Posterior vena cava (tissue), 2 donors: ENCODE measurements at regions of chr15 and their contacts with region 1.

Region 1: GRCh38 chr15:59349680-59350420 is 22.8 kb downstream of the MYO1E start:
- DNase-seq: no peak

Region 2: DNA sequence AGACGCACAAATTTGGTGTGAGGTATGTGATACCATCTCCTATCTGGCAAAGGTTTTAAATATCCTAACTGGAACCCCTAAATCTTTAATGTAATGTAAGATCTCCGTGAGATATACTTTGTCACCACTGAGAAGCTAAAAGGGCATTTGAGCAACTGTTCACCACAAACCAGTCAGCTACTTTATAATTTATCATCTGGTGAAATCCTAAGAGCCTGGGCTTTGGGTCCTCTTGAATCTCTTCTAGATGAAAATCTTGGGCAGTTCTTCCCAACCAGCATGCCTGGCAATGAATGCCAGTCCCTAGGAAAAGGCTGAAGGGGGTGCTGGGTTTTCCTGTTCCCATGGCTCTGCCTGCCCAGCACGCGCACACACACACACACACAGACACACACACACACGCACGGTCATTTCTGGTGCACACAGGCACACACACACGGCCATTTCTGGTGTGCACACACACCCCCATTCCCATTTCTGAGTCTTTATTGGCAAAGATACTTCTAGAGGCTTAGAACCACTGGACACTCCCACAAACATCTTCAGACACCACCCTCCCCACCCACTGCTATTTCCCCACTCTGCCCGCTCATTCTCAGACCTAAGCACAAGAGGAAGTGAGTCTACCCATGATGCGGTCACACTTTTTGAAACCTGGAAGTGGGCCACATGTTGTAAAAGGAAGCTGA is 49.8 kb before region 1 on chr15:
- intact Hi-C with region 1: loop called in 1 of 2 experiments (anchors 10 kb)
- DNase-seq: peak; percentile 88